PC-3 (cell line): ENCODE measurements at regions of chr7 and their contacts with region 1.

Region 1: DNA sequence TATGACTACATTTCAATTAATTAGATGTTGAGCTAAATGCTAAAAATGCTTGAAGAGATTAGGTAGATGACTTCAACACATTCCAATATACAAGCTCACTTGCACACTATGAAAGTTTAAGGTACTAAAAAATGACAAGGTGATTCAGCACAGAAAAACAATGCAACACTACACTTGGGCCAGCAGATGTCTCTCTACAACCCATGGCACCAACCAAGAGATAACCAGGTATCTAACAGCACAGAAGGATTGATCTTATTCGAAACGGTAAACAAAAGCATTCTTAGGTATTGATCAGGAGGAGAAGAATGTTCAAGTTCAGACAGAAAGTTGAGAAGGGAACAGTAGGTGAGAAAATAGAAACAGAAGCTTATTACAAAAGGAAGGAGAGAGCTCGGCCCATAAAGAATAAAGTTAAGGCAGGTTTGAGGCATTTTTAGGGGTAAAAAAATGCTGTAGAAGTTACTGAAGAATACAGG is 248.2 kb upstream of the KLF14 start:
- DNase-seq: peak; percentile 67
- ATAC-seq: peak; percentile 85
- H3K4me3 ChIP-seq: no peak overlapping the region
- H3K27ac ChIP-seq: no peak overlapping the region
- H3K4me1 ChIP-seq: peaks cover 3% of the 10 kb centered on the region; the same call in 1 of the 2 replicates
- H3K27me3 ChIP-seq: no peaks in the 10 kb centered on the region
- CTCF ChIP-seq: peak; percentile 87

Region 2: GRCh38 chr7:131007394-131008330 is 25.5 kb after region 1 on chr7:
- CTCF ChIA-PET with region 1: no interaction called
- POLR2A ChIA-PET with region 1: no interaction called
- intact Hi-C with region 1: loop called (anchors 1 kb)
- DNase-seq: peak; percentile 97
- ATAC-seq: peak; percentile 75
- H3K4me3 ChIP-seq: no peak overlapping the region
- H3K27ac ChIP-seq: peak overlapping the region; percentile 74
- H3K4me1 ChIP-seq: peaks cover 46% of the 10 kb centered on the region
- H3K27me3 ChIP-seq: no peaks in the 10 kb centered on the region
- CTCF ChIP-seq: peak; percentile 77

Region 3: DNA sequence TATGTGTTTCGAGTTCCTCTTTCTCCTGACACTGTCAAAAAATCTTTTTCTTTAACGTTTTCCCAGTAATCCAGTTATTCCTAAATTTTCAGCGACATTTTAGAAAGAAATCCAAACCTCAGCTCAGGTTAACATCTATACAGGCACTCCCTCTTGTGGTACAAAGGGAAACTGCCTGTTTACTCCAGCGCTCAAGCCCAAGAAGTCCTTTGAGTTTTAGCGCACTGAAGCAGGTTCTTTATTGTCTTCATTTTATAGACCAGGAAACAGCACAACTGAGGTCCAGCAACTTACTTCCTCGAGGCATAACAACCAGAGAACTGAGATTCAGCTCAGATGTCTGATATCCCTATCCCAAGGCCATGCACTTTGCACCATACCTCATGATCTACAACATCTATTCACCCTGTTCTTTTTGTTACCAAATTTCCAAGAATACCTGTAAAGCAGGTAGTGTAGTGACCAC is 58.3 kb after region 1 on chr7:
- CTCF ChIA-PET with region 1: interaction called, 6 read pairs
- POLR2A ChIA-PET with region 1: interaction called, 3 read pairs
- intact Hi-C with region 1: loop called (anchors 1 kb)
- DNase-seq: peak; percentile 79
- ATAC-seq: peak; percentile 88
- H3K4me3 ChIP-seq: no peak overlapping the region
- H3K27ac ChIP-seq: no peak overlapping the region
- H3K4me1 ChIP-seq: peaks cover 15% of the 10 kb centered on the region
- H3K27me3 ChIP-seq: no peaks in the 10 kb centered on the region
- CTCF ChIP-seq: peak; percentile 94